ENCODE measurements at regions of chr17 and their contacts with region 1.

Region 1: GRCh38 chr17:50547035-50547735 is at the start of gene SPATA20:
- DNase-seq: peak; percentile 92
- H3K4me3 Mint-ChIP-seq: peak within 1 kb of the TSS; percentile 71
- H3K27ac Mint-ChIP-seq: peak within 1 kb of the TSS; percentile 58
- H3K4me1 Mint-ChIP-seq: peaks cover 8% of the 10 kb centered on the region
- H3K27me3 Mint-ChIP-seq: peaks cover 6% of the 10 kb centered on the region
- total RNA-seq, gene SPATA20: 22.8 to 23.4 TPM

Region 2: GRCh38 chr17:50443368-50443971 is 103.7 kb before region 1 on chr17:
- CTCF ChIA-PET with region 1: no interaction called
- POLR2A ChIA-PET with region 1: no interaction called
- intact Hi-C with region 1: no loop called
- DNase-seq: no peak
- H3K4me3 Mint-ChIP-seq: no peak overlapping the region
- H3K27ac Mint-ChIP-seq: no peak overlapping the region
- H3K4me1 Mint-ChIP-seq: no peaks in the 10 kb centered on the region
- H3K27me3 Mint-ChIP-seq: no peaks in the 10 kb centered on the region

Region 3: DNA sequence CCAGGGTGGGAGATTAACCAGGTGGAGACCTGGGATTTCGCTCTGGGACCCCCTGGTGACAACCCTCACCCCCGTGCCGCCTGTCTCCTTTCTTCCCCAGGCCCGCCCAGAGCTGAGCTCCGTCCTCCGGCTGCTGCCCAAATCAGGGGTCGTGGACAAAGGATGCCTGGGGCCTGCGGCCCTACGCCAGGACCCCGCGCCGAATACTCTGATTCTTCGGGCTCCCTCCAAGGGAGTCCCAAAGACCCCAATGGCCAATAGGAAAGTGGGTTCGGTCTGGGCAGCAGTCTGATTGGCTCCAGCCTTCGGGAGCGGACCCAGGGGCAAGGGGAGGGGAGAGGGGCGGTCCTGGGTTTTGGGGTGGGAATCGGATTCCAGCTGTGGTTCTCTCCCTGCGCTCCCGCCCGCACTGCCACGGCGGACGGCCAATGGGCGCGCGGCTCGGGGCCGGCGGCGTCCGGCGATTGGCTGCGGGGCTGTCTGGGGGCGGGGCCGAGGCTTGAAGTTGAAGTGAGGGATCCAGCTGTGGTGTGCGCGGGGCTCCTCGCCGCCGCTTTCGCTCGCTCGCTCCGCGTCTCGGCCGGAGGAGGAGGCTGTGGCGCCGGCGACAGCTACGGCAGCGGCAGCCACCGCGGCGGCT is 13.1 kb after region 1 on chr17 and contains the start of gene CACNA1G:
- CTCF ChIA-PET with region 1: interaction called, 5 read pairs
- POLR2A ChIA-PET with region 1: no interaction called
- intact Hi-C with region 1: loop called (anchors 2 kb)
- DNase-seq: peak; percentile 91
- H3K4me3 Mint-ChIP-seq: peak within 1 kb of the TSS; percentile 57
- H3K27ac Mint-ChIP-seq: no peak within 1 kb of the TSS
- H3K4me1 Mint-ChIP-seq: peaks cover 18% of the 10 kb centered on the region
- H3K27me3 Mint-ChIP-seq: peaks cover 54% of the 10 kb centered on the region
- total RNA-seq, gene CACNA1G: 0.05 TPM in 1 of 2 experiments, not detected in the other

Region 4: GRCh38 chr17:50613007-50613992 is 66.1 kb after region 1 on chr17:
- CTCF ChIA-PET with region 1: interaction called, 3 read pairs
- POLR2A ChIA-PET with region 1: no interaction called
- intact Hi-C with region 1: loop called (anchors 5 kb)
- DNase-seq: no peak
- H3K4me3 Mint-ChIP-seq: no peak overlapping the region
- H3K27ac Mint-ChIP-seq: no peak overlapping the region
- H3K4me1 Mint-ChIP-seq: peaks cover 4% of the 10 kb centered on the region
- H3K27me3 Mint-ChIP-seq: no peaks in the 10 kb centered on the region

Region 5: GRCh38 chr17:50949989-50950881 is 403.1 kb after region 1 on chr17:
- CTCF ChIA-PET with region 1: no interaction called
- POLR2A ChIA-PET with region 1: no interaction called
- intact Hi-C with region 1: loop called (anchors 10 kb)
- DNase-seq: peak; percentile 72
- H3K4me3 Mint-ChIP-seq: no peak overlapping the region
- H3K27ac Mint-ChIP-seq: no peak overlapping the region
- H3K4me1 Mint-ChIP-seq: peaks cover 10% of the 10 kb centered on the region
- H3K27me3 Mint-ChIP-seq: no peaks in the 10 kb centered on the region